PC-9 (cell line): ENCODE measurements at regions of chr17 and their contacts with region 1.

Region 1: DNA sequence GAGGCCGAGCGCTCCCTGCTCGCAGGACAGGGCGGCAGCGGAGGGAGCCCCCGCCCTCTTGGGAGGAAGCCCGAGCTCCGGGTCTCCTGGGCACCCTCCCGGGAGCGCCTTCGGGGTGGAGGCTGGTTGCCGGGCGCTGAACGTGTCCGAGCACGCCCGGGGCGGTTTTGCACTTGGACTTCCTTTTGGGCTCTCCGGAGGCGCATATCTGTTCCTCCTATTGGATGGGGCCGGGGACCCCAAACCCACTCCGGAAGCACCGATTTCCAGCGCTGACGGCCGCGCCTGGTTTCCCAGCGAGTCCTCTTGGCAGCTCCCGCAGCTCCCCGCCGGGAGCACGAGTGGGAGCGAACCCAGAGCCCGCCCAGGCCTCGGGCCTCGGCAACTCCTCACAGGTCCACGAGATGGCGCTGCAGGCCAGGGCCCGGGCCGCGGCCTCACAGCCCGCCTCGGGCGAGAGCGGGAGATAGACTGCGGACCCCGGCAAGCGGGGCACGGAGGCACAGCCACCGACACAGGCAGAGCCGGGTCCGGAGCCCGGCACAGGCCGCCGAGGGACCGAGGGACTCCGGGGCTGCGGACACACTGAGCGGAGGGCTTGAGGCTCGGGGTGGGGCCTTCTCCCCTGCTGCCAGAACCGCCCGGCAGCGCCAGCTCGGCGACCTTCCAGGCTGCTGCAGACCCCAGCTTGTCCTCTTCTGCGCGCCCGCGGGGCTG is 12.7 kb downstream of the TBX2 start:
- DNase-seq: peak; percentile 63 to 89
- H3K4me3 ChIP-seq: peak overlapping the region; percentile 92
- H3K27ac ChIP-seq: peak overlapping the region; percentile 27
- H3K4me1 ChIP-seq: 0 out of 2 replicates have a peak, but pooled peaks cover 6% of the 10 kb centered on the region
- H3K27me3 ChIP-seq: no peaks in the 10 kb centered on the region
- CTCF ChIP-seq: peak; percentile 99

Region 2: DNA sequence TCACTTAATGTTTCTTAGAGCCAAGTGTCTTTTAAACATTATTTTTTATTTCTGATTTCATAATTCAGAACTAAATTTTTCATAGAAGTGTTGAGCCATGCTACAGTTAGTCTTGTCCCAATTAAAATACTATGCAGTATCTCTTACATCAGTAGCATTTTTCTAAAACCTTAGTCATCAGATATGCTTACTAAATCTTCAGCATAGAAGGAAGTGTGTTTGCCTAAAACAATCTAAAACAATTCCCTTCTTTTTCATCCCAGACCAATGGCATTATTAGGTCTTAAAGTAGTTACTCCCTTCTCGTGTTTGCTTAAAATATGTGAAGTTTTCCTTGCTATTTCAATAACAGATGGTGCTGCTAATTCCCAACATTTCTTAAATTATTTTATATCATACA is 748.3 kb before region 1 on chr17:
- CTCF ChIA-PET with region 1: no interaction called
- POLR2A ChIA-PET with region 1: no interaction called
- intact Hi-C with region 1: no loop called
- DNase-seq: no peak
- H3K4me3 ChIP-seq: no peak overlapping the region
- H3K27ac ChIP-seq: peak overlapping the region; percentile 33; the same call in 1 of the 2 replicates
- H3K4me1 ChIP-seq: no peaks in the 10 kb centered on the region
- H3K27me3 ChIP-seq: no peaks in the 10 kb centered on the region
- CTCF ChIP-seq: no peak

Region 3: GRCh38 chr17:60971515-60972369 is 440.6 kb before region 1 on chr17:
- CTCF ChIA-PET with region 1: no interaction called
- POLR2A ChIA-PET with region 1: interaction called, 3 read pairs
- intact Hi-C with region 1: loop called (anchors 2 kb)
- DNase-seq: peak; percentile 40
- H3K4me3 ChIP-seq: no peak overlapping the region
- H3K27ac ChIP-seq: no peak overlapping the region
- H3K4me1 ChIP-seq: no peaks in the 10 kb centered on the region
- H3K27me3 ChIP-seq: no peaks in the 10 kb centered on the region
- CTCF ChIP-seq: peak; percentile 81

Region 4: DNA sequence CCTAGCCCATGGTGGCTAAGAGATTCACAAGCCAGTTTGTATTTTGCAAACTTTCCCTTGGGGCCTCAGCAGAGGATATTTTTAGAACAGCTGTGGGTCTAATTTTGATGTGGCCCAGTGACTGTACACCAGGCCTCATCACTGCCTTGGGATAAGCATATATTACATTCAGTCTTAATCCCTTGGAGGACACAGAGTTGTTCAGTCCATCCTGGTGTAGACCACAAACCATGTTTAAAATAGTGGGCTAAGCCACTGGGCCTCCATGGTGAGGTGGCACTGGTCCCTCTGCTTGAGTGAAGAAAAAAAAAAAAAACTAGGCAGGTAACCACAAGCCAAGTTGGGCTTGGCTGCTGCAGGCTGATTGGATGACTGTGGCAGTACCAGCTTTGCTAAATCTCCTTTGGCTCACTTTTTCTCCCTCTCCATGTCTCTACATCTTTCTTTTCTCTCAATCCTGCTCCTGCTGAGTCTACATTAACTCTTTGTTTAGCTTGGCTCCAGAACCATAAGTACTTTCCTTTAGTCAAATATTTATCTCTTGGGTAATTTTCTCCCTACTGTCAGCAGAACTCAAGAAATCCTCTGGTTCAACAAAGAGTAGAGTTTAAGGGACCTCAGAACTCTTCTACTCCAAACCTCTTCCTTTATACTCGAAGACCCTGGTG is 132.7 kb before region 1 on chr17:
- CTCF ChIA-PET with region 1: no interaction called
- POLR2A ChIA-PET with region 1: no interaction called
- intact Hi-C with region 1: no loop called
- DNase-seq: no peak
- H3K4me3 ChIP-seq: no peak overlapping the region
- H3K27ac ChIP-seq: no peak overlapping the region
- H3K4me1 ChIP-seq: no peaks in the 10 kb centered on the region
- H3K27me3 ChIP-seq: no peaks in the 10 kb centered on the region
- CTCF ChIP-seq: no peak

Region 5: DNA sequence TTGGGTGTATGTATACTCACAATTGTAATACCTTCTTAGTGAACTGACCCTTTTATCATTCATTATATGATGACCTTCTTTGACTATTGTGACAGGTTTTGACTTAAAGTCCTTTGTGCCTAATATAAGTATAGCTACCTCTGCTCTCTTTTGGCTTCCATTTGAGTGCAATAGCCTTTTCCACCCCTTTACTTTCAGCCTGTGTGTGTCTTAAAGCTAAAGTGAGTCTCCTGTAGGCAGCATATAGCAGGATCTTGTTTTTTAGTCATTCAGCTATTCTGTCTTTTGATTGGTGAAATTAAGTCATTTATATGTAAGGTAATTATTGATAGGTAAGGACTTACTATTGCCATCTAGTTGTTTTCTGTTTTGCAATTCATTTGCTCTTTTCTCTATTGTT is 24.0 kb after region 1 on chr17:
- CTCF ChIA-PET with region 1: no interaction called
- POLR2A ChIA-PET with region 1: no interaction called
- intact Hi-C with region 1: no loop called
- DNase-seq: no peak
- H3K4me3 ChIP-seq: no peak overlapping the region
- H3K27ac ChIP-seq: no peak overlapping the region
- H3K4me1 ChIP-seq: 0 out of 2 replicates have a peak, but pooled peaks cover 5% of the 10 kb centered on the region
- H3K27me3 ChIP-seq: no peaks in the 10 kb centered on the region
- CTCF ChIP-seq: no peak

Region 6: GRCh38 chr17:61551255-61551742 is 139.0 kb after region 1 on chr17:
- CTCF ChIA-PET with region 1: no interaction called
- POLR2A ChIA-PET with region 1: no interaction called
- intact Hi-C with region 1: loop called (anchors 1 kb)
- DNase-seq: no peak
- H3K4me3 ChIP-seq: no peak overlapping the region
- H3K27ac ChIP-seq: no peak overlapping the region
- H3K4me1 ChIP-seq: peaks cover 17% of the 10 kb centered on the region
- H3K27me3 ChIP-seq: no peaks in the 10 kb centered on the region
- CTCF ChIP-seq: peak; percentile 81

Region 7: GRCh38 chr17:61635913-61636432 is 223.7 kb after region 1 on chr17:
- CTCF ChIA-PET with region 1: no interaction called
- POLR2A ChIA-PET with region 1: no interaction called
- intact Hi-C with region 1: loop called (anchors 5 kb)
- DNase-seq: peak; percentile 36 to 43
- H3K4me3 ChIP-seq: no peak overlapping the region
- H3K27ac ChIP-seq: no peak overlapping the region
- H3K4me1 ChIP-seq: no peaks in the 10 kb centered on the region
- H3K27me3 ChIP-seq: no peaks in the 10 kb centered on the region
- CTCF ChIP-seq: peak; percentile 90

Region 8: GRCh38 chr17:62109378-62109902 is 697.1 kb after region 1 on chr17:
- CTCF ChIA-PET with region 1: interaction called, 6 read pairs
- POLR2A ChIA-PET with region 1: no interaction called
- intact Hi-C with region 1: loop called (anchors 2 kb)
- DNase-seq: peak; percentile 77 to 79
- H3K4me3 ChIP-seq: no peak overlapping the region
- H3K27ac ChIP-seq: no peak overlapping the region
- H3K4me1 ChIP-seq: peaks cover 4% of the 10 kb centered on the region; the same call in 1 of the 2 replicates
- H3K27me3 ChIP-seq: no peaks in the 10 kb centered on the region
- CTCF ChIP-seq: peak; percentile 82